B cell (primary cell): ENCODE measurements at regions of chr17 and their contacts with region 1.

Region 1: DNA sequence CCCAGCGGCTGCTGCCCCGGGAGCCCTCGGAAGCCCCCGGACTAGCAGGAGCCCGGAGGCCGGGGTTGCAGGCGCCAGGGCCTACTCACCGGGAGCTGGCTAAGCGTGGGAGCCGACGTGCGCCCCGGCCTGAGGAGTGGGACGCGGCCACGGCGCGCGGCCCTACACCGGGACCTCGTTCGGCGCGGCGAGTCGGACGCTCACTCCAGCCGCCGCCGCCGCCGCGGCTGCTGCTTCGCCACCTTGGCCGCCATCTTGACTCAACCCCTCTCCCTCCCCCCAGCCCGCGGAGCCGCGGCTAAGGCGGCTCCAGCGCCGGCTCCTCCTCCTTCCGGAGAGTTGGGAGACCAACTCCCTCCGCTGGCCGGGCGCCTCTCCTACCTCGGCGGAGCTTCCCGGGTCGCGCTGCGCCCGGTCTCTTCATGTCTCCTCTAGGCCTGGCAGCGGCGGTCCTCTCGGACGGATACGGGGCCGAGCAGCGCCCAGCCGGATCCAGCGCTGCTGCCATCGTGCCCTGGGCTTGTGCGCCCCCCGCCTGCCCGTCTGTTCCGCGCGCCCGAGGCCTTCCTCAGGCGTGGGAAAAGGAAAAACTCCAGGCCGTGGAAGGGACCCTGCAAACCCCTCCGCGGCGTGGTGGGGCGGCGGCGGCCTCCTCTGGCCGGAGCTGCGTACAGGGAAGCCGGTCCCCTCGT is at the start of gene NCOR1:
- DNase-seq: peak; percentile 92
- ATAC-seq: peak; percentile 85
- H3K4me3 ChIP-seq: peak within 1 kb of the TSS; percentile 77 to 93 (median 92)
- H3K4me3 Mint-ChIP-seq: peak within 1 kb of the TSS; percentile 96
- H3K27ac ChIP-seq: peak within 1 kb of the TSS; percentile 78 to 90
- H3K27ac Mint-ChIP-seq: peak within 1 kb of the TSS; percentile 91
- H3K4me1 ChIP-seq: peaks cover 25 to 35% of the 10 kb centered on the region in 2 donors
- H3K4me1 Mint-ChIP-seq: peaks cover 43% of the 10 kb centered on the region
- H3K27me3 ChIP-seq: no peaks in the 10 kb centered on the region
- H3K27me3 Mint-ChIP-seq: no peaks in the 10 kb centered on the region
- CTCF ChIP-seq: peak; percentile 44
- total RNA-seq, gene NCOR1: 217 and 229 TPM in 2 replicates

Region 2: GRCh38 chr17:16140853-16141252 is 74.6 kb before region 1 on chr17:
- CTCF ChIA-PET with region 1: no interaction called
- POLR2A ChIA-PET with region 1: no interaction called
- intact Hi-C with region 1: no loop called
- DNase-seq: no peak
- ATAC-seq: no peak
- H3K4me3 ChIP-seq: no peak overlapping the region
- H3K4me3 Mint-ChIP-seq: no peak overlapping the region
- H3K27ac ChIP-seq: no peak overlapping the region
- H3K27ac Mint-ChIP-seq: no peak overlapping the region
- H3K4me1 ChIP-seq: no peaks in the 10 kb centered on the region
- H3K4me1 Mint-ChIP-seq: no peaks in the 10 kb centered on the region
- H3K27me3 ChIP-seq: no peaks in the 10 kb centered on the region
- H3K27me3 Mint-ChIP-seq: no peaks in the 10 kb centered on the region
- CTCF ChIP-seq: no peak

Region 3: GRCh38 chr17:16199093-16199492 is 16.3 kb before region 1 on chr17:
- CTCF ChIA-PET with region 1: interaction called, 3 read pairs
- POLR2A ChIA-PET with region 1: no interaction called
- intact Hi-C with region 1: loop called (anchors 1 kb)
- DNase-seq: peak; percentile 48
- ATAC-seq: no peak
- H3K4me3 ChIP-seq: no peak overlapping the region
- H3K4me3 Mint-ChIP-seq: peak overlapping the region; percentile 73
- H3K27ac ChIP-seq: peak overlapping the region; percentile 28 to 82
- H3K27ac Mint-ChIP-seq: peak overlapping the region; percentile 78
- H3K4me1 ChIP-seq: peaks cover 34 to 37% of the 10 kb centered on the region in 2 donors
- H3K4me1 Mint-ChIP-seq: peaks cover 57% of the 10 kb centered on the region
- H3K27me3 ChIP-seq: no peaks in the 10 kb centered on the region
- H3K27me3 Mint-ChIP-seq: no peaks in the 10 kb centered on the region
- CTCF ChIP-seq: no peak

Region 4: GRCh38 chr17:16353317-16354174 is 138.1 kb after region 1 on chr17 and contains the start of gene CENPV:
- CTCF ChIA-PET with region 1: interaction called, 4 read pairs
- POLR2A ChIA-PET with region 1: interaction called, 5 read pairs
- intact Hi-C with region 1: loop called (anchors 5 kb)
- DNase-seq: peak; percentile 86
- ATAC-seq: peak; percentile 87
- H3K4me3 ChIP-seq: peak within 1 kb of the TSS; percentile 51 to 78 (median 70)
- H3K4me3 Mint-ChIP-seq: peak within 1 kb of the TSS; percentile 94
- H3K27ac ChIP-seq: peak within 1 kb of the TSS in 1 of 2 donors; percentile 56
- H3K27ac Mint-ChIP-seq: peak within 1 kb of the TSS; percentile 80
- H3K4me1 ChIP-seq: peaks cover 8 to 16% of the 10 kb centered on the region in 2 donors
- H3K4me1 Mint-ChIP-seq: peaks cover 15% of the 10 kb centered on the region
- H3K27me3 ChIP-seq: no peaks in the 10 kb centered on the region
- H3K27me3 Mint-ChIP-seq: no peaks in the 10 kb centered on the region
- CTCF ChIP-seq: no peak
- total RNA-seq, gene CENPV: 15.8 and 17.7 TPM in 2 replicates

Region 5: DNA sequence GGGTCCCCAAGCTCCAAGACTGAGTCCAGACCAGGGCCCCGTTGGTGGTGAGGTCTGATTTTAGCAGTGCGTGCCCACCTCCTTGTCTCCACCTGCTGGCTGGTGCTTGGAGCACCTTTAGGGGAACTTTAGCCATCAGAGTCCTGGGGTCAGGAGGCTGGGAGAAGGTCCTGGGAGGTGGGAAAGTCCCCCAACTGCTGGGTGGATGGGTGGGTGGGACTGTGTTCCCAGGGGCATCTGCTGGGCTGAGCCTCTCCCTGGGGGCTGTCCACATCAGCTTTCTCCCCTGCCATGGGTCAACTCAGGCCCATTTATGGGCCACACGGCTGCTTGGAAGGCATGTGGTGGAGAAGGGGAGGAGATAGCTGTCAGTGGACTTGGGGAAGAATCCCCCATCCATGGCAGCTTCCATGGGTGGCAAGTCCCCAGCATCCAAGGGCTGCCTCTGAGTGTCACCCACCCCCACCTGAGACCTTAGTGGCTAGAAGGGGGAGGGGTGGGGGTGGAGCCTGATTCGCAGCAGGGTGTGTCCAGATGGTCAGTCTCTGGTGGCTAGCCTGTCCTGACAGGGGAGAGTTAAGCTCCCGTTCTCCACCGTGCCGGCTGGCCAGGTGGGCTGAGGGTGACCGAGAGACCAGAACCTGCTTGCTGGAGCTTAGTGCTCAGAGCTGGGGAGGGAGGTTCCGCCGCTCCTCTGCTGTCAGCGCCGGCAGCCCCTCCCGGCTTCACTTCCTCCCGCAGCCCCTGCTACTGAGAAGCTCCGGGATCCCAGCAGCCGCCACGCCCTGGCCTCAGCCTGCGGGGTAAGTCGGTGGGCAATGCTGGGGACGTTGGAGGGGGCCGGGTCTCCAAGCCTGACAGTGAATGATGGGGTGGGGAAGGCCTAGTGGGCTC is 199.9 kb after region 1 on chr17 and contains the start of gene TRPV2:
- CTCF ChIA-PET with region 1: no interaction called
- POLR2A ChIA-PET with region 1: no interaction called
- intact Hi-C with region 1: loop called (anchors 10 kb)
- DNase-seq: peak; percentile 73
- ATAC-seq: peak; percentile 47
- H3K4me3 ChIP-seq: peak within 1 kb of the TSS; percentile 53 to 86 (median 67)
- H3K4me3 Mint-ChIP-seq: peak within 1 kb of the TSS; percentile 98
- H3K27ac ChIP-seq: peak within 1 kb of the TSS; percentile 94 to 98
- H3K27ac Mint-ChIP-seq: peak within 1 kb of the TSS; percentile 95
- H3K4me1 ChIP-seq: peaks cover 27 to 48% of the 10 kb centered on the region in 2 donors
- H3K4me1 Mint-ChIP-seq: peaks cover 42% of the 10 kb centered on the region
- H3K27me3 ChIP-seq: no peaks in the 10 kb centered on the region
- H3K27me3 Mint-ChIP-seq: no peaks in the 10 kb centered on the region
- CTCF ChIP-seq: peak; percentile 64
- total RNA-seq, gene TRPV2: 58.6 TPM in 2 replicates

Region 6: DNA sequence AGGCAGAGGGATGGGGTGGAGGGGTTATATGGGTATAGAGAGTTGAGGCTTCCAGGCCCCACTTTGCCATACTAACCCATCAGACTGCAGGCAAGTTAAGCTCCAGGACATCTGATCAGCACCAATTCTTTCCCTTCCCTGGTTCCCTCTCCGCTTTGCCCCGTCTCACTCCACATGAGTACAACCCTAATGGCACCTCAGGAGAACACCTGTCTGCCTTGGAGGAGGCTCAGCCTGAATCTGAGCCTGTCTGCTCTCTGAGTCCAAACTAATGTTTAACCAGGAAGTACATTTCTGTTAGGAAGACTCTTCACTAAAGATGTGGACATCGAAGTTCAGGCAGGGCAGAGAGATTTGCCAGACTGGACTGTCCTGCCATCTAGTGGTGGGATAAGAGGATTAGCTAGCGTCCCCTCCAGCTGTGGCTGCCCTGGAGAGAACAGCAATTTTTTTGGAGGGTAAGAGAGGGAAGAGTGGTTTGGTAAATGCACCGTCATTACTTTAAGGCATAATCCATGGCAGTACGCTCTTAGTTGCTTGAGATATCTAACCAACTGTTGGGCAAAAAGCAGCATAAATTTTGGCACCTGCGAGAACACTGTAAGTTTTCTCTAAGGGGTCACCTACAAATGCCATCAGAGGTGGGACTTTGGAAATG is 305.8 kb after region 1 on chr17:
- CTCF ChIA-PET with region 1: interaction called, 4 read pairs
- POLR2A ChIA-PET with region 1: no interaction called
- intact Hi-C with region 1: loop called (anchors 5 kb)
- DNase-seq: peak; percentile 80
- ATAC-seq: peak; percentile 88
- H3K4me3 ChIP-seq: no peak overlapping the region
- H3K4me3 Mint-ChIP-seq: no peak overlapping the region
- H3K27ac ChIP-seq: no peak overlapping the region
- H3K27ac Mint-ChIP-seq: no peak overlapping the region
- H3K4me1 ChIP-seq: peaks cover 0 to 4% of the 10 kb centered on the region in 2 donors
- H3K4me1 Mint-ChIP-seq: peaks cover 7% of the 10 kb centered on the region
- H3K27me3 ChIP-seq: peaks cover 0 to 18% (median 7%) of the 10 kb centered on the region in 4 experiments
- H3K27me3 Mint-ChIP-seq: peaks cover 51% of the 10 kb centered on the region
- CTCF ChIP-seq: peak; percentile 86

Region 7: DNA sequence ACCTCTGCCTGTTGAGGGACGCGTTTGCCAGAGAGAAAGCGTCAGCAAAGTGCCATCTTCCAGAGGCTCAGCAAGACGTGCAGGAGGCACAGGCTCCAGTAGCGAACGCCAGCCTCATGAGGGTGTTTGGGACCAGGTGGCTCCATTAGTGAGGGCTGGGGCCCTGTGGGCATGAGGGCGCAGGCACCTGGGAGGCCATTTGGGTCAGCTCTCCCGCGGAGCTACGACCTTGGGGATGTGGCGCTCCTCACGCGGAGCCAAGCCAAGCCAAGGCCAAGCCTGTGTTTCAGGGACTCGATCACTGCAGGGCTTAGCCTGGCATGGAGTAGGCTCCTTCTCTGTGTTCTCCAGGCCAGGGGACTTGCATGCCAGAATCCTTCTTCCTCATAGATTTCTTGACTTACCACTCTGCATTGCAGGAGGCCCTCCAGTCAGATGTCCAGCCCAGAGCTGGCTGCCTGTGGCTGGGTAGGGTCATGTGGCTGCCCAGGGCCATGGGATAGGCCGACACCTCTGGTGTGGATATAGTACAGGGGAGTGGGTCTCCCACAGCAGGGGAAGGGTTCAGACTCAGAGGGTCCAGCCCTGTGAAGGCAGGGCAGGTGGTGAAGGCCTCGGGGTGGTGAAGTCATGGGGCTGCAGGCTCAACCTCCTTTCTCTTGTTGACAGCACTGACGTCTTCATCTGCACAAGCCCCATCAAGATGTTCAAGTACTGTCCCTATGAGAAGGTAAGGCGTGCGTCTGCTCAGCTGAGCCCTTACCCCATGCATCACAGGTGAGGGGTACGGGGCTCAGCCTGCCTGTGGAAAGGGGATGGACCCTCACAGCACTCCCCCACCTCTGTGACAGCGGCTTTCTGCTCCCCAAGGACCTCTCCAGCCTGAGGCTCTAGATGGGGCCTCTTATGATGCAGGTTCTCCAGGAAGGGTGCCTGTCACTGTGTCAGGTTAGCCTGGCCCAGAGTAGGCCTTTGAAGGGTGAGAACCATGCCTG is 1107.4 kb after region 1 on chr17:
- CTCF ChIA-PET with region 1: no interaction called
- POLR2A ChIA-PET with region 1: no interaction called
- intact Hi-C with region 1: no loop called
- DNase-seq: no peak
- ATAC-seq: no peak
- H3K4me3 ChIP-seq: no peak overlapping the region
- H3K4me3 Mint-ChIP-seq: no peak overlapping the region
- H3K27ac ChIP-seq: no peak overlapping the region
- H3K27ac Mint-ChIP-seq: no peak overlapping the region
- H3K4me1 ChIP-seq: no peaks in the 10 kb centered on the region
- H3K4me1 Mint-ChIP-seq: no peaks in the 10 kb centered on the region
- H3K27me3 ChIP-seq: no peaks in the 10 kb centered on the region
- H3K27me3 Mint-ChIP-seq: no peaks in the 10 kb centered on the region
- CTCF ChIP-seq: no peak